ENCODE measurements at regions of chr20 and their contacts with region 1.

Region 1: DNA sequence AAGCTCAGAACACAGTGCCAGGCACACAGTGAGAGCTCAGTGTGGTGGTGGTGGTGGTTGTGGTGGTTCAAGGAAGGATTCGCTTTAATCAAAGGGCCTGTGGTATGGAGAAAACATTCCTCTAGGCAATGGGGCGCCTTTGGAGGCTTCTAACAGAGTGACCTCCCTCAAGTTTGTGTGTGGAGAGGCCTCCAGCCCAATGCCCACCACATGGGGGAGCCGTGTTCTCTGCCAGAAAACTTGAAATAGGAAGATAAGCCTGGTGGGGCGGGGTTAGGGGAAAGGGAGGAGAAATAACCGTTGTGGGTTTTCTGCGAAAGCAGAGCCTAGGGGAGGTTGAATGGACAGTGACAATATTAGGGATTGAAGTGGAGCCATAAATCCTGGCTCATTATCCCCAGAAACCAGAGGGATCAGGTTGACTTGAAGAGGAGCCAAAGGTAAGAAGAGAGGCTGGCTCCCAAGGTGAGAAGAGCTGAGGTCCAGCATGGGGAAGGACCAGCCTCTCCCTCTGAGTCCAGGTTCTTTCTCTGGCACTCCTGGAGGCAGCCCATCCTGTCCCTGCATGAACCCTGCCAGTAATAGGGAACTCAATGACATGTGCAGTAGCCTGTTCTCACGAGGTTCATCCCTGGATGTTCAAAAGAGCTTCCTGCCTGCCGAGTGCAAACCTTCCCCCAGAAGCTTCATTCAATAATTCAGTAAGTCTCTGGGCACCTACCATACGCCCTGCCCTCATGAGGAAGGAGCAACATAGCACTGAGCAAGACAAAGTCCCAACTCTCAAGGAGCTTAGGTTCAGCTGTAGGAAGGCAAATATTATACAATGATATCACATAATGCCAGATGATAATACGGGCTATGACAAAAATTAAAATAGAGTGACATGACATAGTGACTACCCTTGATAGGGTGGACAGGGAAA is 51.4 kb downstream of the TGM2 start:
- DNase-seq: peak; percentile 52 to 75 (median 73)
- H3K4me3 ChIP-seq: no peak overlapping the region
- H3K27ac ChIP-seq: no peak overlapping the region
- H3K4me1 ChIP-seq: peaks cover 0 to 8% (median 4%) of the 10 kb centered on the region in 4 experiments
- H3K27me3 ChIP-seq: no peaks in the 10 kb centered on the region

Region 2: DNA sequence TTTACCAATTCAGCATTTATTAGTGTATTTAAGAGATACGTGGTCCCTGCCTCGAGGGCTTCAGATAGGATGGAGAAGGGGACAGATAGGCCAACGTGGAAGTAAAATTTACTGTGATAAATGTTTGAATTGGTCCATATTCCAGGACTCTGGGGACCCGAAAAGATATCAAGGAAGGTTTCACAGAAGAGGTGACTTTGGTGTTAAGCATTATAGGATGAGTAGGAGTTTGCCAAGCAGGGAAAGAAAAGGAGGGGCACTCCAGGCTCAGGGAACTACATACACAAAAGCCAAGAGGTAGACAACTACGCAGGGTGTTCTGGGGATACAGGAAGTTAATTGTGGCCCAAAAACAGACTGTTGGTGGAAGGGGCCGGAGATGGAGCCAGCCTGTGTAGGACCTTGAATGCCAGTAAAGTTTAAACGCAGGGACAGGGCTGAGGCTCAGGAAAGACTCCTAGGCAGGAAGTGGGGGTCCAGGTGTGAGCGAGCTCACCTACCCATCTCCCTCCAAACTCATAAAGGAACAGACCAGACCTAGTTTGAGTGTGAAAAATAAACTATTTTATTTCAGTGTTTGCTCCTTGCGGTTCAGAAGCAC is 14.4 kb after region 1 on chr20:
- CTCF ChIA-PET with region 1: interaction called, 16 read pairs
- POLR2A ChIA-PET with region 1: no interaction called
- DNase-seq: no peak
- H3K4me3 ChIP-seq: no peak overlapping the region
- H3K27ac ChIP-seq: no peak overlapping the region
- H3K4me1 ChIP-seq: no peaks in the 10 kb centered on the region
- H3K27me3 ChIP-seq: no peaks in the 10 kb centered on the region

Region 3: DNA sequence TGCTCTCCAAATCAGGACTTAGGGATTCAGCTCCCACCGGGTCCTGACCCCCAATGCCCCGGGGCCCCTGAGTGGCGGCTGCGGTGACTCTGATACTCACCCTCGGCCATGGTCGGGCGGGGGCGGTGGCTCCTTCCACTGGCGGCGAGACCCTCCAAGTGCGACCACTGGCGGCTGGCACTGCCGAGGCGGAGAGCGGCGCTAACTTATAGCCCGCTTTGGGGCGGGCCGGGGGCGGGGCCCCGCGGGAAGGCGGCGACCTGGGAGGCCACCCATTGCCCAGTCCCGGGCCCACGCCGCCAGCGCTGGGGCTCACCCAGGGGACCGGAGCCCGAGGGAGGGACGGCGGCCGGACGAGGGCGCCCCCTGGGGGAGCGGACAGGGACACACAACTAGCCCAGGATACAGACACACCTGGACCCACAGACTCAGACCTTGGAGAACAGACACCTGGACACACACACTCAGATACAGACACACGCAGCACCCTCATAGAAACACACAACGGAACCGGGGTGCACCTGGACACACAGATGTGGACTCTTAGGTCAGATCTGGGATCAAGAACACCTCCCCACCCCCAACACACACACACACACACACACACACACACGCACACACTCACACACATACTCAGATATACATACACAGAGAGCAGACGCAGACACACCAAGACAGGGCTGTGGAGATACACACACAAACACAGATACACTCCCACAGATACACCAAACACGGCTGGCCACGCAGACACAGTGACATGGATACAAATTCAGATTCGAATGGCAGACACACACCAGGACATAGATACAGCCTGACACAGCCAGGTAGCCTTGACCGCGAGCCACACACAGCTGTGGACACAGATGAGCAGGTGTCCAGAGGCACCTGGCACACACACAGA is 51.7 kb after region 1 on chr20 and contains the start of gene TGM2:
- CTCF ChIA-PET with region 1: interaction called, 33 read pairs
- POLR2A ChIA-PET with region 1: no interaction called
- DNase-seq: peak; percentile 56 to 73 (median 68)
- H3K4me3 ChIP-seq: peak within 1 kb of the TSS in 2 of 7 experiments; percentile 37 to 48
- H3K27ac ChIP-seq: no peak within 1 kb of the TSS
- H3K4me1 ChIP-seq: peaks cover 0 to 27% (median 8%) of the 10 kb centered on the region in 4 experiments
- H3K27me3 ChIP-seq: peaks cover 0 to 22% (median 2%) of the 10 kb centered on the region in 5 experiments

Measured in common myeloid progenitor, CD34-positive (primary cell).